ENCODE measurements at regions of chr2 and their contacts with region 1.

Region 1: DNA sequence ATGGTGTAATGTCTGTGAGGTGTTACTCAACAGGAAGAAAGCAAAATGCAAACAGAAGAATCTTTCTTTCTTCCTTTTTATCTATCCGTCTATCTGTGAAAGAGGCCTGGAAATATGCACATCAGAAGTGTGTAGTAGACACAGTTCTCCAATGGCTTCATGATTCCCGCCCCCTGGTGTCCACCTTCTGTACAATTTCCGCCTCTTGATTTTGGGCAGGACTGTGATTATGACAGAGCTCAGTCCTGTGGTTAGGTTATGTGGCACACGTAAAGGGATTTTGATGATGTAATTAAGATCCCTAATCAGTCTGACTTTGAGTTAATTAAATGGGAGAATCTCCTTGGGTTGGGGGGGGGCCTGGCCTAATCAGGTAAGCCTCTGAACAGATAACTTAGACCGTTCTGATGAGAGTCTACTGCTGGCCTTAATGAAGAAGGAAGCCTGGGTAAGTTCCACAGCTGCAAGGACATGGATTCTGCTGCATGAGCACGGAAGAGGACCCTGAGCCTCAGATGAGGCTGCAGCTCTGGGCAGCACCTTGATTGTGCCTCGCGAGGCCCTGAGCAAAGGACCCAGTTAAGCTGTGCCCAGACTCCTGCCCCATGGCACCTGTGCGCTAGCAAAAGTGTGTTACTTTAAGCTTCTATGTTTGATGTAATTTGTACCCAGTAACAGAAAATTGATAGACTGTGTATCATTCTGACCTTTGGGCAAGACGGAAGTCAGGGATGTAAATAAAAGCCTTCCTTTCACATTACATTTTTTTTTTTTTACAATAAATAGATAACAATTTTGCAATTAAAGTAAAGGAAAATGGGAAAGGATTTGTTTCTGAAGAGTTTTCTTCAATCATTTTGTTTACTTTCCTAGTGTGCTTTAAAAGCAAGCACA is 11.3 kb upstream of the KCNF1 start:
- DNase-seq: peak; percentile 79
- H3K4me3 ChIP-seq: no peak overlapping the region
- H3K27ac ChIP-seq: no peak overlapping the region
- H3K4me1 ChIP-seq: no peaks in the 10 kb centered on the region; a peak in 1 of 4 replicates
- H3K27me3 ChIP-seq: no peaks in the 10 kb centered on the region
- CTCF ChIP-seq: peak; percentile 63
- EP300 ChIP-seq: no peak
- RAD21 ChIP-seq: peak; percentile 58

Region 2: DNA sequence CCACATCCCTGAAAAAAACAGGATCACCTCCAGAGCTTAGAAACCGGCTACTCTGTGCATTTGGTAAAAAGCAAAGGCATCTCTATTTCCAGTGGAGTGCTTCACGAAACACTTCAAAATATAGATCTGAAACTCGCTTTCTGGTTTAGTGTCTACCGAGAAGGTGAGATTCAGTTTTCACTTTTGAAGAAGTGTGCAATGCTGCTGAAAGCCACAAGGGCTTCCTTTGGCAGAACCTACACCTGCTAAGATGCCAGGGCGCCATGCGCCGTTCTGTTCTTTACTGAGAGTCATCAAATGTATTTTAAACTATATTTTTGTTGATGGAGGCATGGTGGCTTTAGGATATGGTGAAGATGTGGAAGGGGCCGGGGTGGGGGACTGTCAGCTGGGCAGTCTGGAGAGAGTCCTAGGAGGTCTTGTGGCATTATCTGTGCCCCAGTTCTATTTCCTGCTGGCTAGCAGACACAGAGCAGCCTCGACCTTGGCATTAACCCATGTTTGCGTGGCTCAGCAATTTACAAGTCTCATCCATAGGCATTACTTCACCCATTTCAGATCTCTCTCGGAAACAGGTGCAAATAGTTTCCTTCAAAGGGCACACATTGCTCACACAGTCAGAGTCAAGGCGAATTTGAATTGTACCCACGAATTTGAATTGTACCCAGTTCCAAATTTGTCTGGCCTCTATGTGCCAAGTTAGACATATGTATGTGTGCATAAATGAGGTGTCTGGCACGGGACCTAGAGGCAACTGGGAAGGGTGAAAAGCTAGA is 35.4 kb before region 1 on chr2:
- CTCF ChIA-PET with region 1: interaction called, 11 read pairs
- POLR2A ChIA-PET with region 1: no interaction called
- DNase-seq: no peak
- H3K4me3 ChIP-seq: no peak overlapping the region
- H3K27ac ChIP-seq: no peak overlapping the region
- H3K4me1 ChIP-seq: peaks cover 23 to 25% of the 10 kb centered on the region in 2 experiments
- H3K27me3 ChIP-seq: no peaks in the 10 kb centered on the region
- CTCF ChIP-seq: peak; percentile 25; the same call in 1 of the 2 replicates
- EP300 ChIP-seq: no peak
- RAD21 ChIP-seq: no peak

Region 3: DNA sequence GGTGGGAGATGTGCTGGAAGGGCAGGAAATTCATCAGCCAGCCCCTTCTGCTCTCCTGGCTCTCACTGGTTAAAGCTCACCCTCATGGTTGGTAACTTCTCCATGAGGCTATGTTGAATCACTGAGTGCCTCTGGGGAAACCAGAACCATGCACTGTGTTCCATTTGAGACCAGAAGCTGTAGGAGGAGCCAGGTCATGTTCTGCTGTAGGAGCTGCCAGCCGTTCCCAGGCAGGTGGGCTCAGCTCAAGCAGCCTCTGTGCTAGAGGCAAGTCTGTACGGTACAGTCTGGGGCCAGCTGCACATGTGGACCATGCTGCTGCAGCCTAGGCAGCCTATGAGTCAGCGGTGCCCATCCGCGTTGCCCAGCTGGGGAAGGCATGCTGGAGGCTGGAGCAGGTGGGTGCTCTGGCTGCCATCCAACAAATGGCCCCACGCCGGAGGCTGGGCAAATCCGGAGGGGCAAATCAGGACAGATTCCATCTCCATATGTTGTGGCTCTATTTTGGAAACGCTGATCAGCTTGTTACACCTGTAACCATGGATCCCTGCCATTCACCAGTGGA is 10.7 kb before region 1 on chr2:
- CTCF ChIA-PET with region 1: interaction called, 10 read pairs
- POLR2A ChIA-PET with region 1: no interaction called
- DNase-seq: peak; percentile 70
- H3K4me3 ChIP-seq: no peak overlapping the region
- H3K27ac ChIP-seq: no peak overlapping the region
- H3K4me1 ChIP-seq: peaks cover 10 to 14% of the 10 kb centered on the region in 2 experiments; a peak in 2 of 4 replicates
- H3K27me3 ChIP-seq: peaks cover 13% of the 10 kb centered on the region; the same call in 1 of the 2 replicates
- CTCF ChIP-seq: no peak
- EP300 ChIP-seq: no peak
- RAD21 ChIP-seq: no peak

Region 4: DNA sequence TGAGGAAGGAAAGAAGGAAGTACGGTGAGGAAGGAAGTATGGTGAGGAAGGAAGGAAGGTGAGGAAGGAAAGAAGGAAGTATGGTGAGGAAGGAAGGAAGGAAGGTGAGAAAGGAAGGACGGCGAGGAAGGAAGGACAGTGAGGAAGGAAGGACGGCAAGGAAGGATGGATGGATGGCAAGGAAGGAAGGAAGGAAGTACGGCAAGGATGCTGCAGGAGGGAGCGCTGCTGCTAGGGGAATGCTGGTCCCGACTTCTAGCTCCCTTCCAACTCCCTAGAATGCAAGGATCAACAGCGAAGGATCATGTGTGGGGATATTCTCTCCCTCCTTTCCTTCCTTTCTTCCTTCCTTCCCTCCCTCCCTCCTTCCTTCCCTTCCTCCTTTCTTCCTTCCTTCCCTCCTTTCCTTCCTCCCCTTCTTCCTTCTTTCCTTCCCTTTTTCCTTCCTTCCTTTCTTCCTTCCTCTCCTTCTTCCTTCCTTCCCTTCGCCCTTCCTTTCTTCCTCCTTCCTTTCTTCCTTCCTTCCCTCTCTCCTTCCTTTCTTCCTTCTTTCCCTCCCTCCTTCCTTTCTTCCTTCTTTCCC is 212.5 kb after region 1 on chr2:
- CTCF ChIA-PET with region 1: no interaction called
- POLR2A ChIA-PET with region 1: no interaction called
- DNase-seq: no peak
- H3K4me3 ChIP-seq: no peak overlapping the region
- H3K27ac ChIP-seq: no peak overlapping the region
- H3K4me1 ChIP-seq: no peaks in the 10 kb centered on the region
- H3K27me3 ChIP-seq: no peaks in the 10 kb centered on the region; the same call in 1 of the 2 replicates
- CTCF ChIP-seq: no peak
- EP300 ChIP-seq: no peak
- RAD21 ChIP-seq: no peak

Measured in SK-N-SH (cell line).